IMR-90 (cell line): ENCODE measurements at regions of chr20 and their contacts with region 1.

Region 1: GRCh38 chr20:10848810-10849370 is 175.1 kb upstream of the JAG1 start:
- DNase-seq: peak; percentile 94
- ATAC-seq: peak; percentile 96
- H3K4me3 ChIP-seq: no peak overlapping the region
- H3K27ac ChIP-seq: peak overlapping the region; percentile 50; the same call in 1 of the 2 replicates
- H3K4me1 ChIP-seq: peaks cover 2% of the 10 kb centered on the region; the same call in 1 of the 2 replicates
- H3K27me3 ChIP-seq: no peaks in the 10 kb centered on the region
- CTCF ChIP-seq: no peak
- POLR2A ChIP-seq: no peak
- RAD21 ChIP-seq: peak; percentile 30

Region 2: GRCh38 chr20:10219452-10219791 is 629.5 kb before region 1 on chr20:
- CTCF ChIA-PET with region 1: no interaction called
- POLR2A ChIA-PET with region 1: no interaction called
- dilution Hi-C with region 1: no loop called
- in situ Hi-C with region 1: no loop called
- intact Hi-C with region 1: no loop called
- DNase-seq: peak; percentile 53
- ATAC-seq: peak; percentile 64
- H3K4me3 ChIP-seq: peak overlapping the region; percentile 77
- H3K27ac ChIP-seq: no peak overlapping the region
- H3K4me1 ChIP-seq: peaks cover 2% of the 10 kb centered on the region; the same call in 1 of the 2 replicates
- H3K27me3 ChIP-seq: no peaks in the 10 kb centered on the region
- CTCF ChIP-seq: no peak
- POLR2A ChIP-seq: no peak
- RAD21 ChIP-seq: peak; percentile 24; the same call in 1 of the 2 replicates

Region 3: DNA sequence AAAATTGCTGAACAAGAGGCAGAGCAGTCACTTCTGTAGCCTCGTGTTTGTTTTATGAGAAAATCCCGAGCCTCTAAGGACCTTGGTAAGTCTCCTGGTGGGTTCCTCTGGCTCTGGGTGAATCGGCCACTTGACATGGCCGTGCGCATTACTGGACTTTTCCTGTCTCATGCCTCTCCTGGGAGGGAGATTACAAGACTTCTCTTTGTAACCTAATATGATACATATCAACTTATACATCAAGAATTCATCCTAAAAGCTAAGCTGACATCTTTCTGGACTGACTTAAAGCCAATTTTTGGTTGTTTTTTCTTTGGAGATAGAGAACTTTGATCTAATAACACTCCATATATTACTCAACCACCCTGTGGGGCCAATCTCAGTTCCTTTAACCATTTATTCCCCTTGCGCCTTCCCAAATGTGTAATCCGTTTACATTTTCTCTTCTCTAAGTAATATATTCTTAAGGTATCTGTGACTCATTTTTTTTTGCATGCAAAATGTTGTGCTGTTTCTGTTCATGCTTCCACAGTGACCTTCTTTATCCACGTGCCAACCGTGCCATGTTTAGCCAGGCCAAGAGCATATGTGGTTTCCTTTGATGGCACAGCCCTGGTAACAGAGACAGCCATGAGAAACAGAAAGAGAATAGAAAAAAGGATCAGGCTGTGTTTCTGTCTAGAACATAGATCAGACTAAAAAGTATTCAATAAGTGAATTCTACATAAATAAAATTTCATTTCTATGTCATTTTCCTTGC is 127.6 kb before region 1 on chr20:
- CTCF ChIA-PET with region 1: no interaction called
- POLR2A ChIA-PET with region 1: no interaction called
- dilution Hi-C with region 1: no loop called
- in situ Hi-C with region 1: no loop called
- intact Hi-C with region 1: loop called (anchors 5 kb)
- DNase-seq: peak; percentile 69
- ATAC-seq: peak; percentile 61
- H3K4me3 ChIP-seq: no peak overlapping the region
- H3K27ac ChIP-seq: no peak overlapping the region
- H3K4me1 ChIP-seq: peaks cover 10% of the 10 kb centered on the region
- H3K27me3 ChIP-seq: no peaks in the 10 kb centered on the region; the same call in 1 of the 2 replicates
- CTCF ChIP-seq: no peak
- POLR2A ChIP-seq: no peak
- RAD21 ChIP-seq: no peak

Region 4: GRCh38 chr20:10798811-10799210 is 50.1 kb before region 1 on chr20:
- CTCF ChIA-PET with region 1: no interaction called
- POLR2A ChIA-PET with region 1: no interaction called
- dilution Hi-C with region 1: no loop called
- in situ Hi-C with region 1: no loop called
- intact Hi-C with region 1: no loop called
- DNase-seq: peak; percentile 33
- ATAC-seq: no peak
- H3K4me3 ChIP-seq: no peak overlapping the region
- H3K27ac ChIP-seq: no peak overlapping the region
- H3K4me1 ChIP-seq: peaks cover 2% of the 10 kb centered on the region; the same call in 1 of the 2 replicates
- H3K27me3 ChIP-seq: peaks cover 5% of the 10 kb centered on the region
- CTCF ChIP-seq: no peak
- POLR2A ChIP-seq: no peak
- RAD21 ChIP-seq: no peak

Region 5: GRCh38 chr20:11274141-11274594 is 425.3 kb after region 1 on chr20:
- CTCF ChIA-PET with region 1: no interaction called
- POLR2A ChIA-PET with region 1: no interaction called
- dilution Hi-C with region 1: no loop called
- in situ Hi-C with region 1: no loop called
- intact Hi-C with region 1: loop called (anchors 5 kb)
- DNase-seq: peak; percentile 79
- ATAC-seq: peak; percentile 94
- H3K4me3 ChIP-seq: no peak overlapping the region
- H3K27ac ChIP-seq: no peak overlapping the region
- H3K4me1 ChIP-seq: no peaks in the 10 kb centered on the region
- H3K27me3 ChIP-seq: no peaks in the 10 kb centered on the region
- CTCF ChIP-seq: peak; percentile 78
- POLR2A ChIP-seq: no peak
- RAD21 ChIP-seq: peak; percentile 90

Region 6: GRCh38 chr20:11305406-11305805 is 456.5 kb after region 1 on chr20:
- CTCF ChIA-PET with region 1: no interaction called
- POLR2A ChIA-PET with region 1: no interaction called
- dilution Hi-C with region 1: no loop called
- in situ Hi-C with region 1: no loop called
- intact Hi-C with region 1: no loop called
- DNase-seq: peak; percentile 5
- ATAC-seq: no peak
- H3K4me3 ChIP-seq: no peak overlapping the region
- H3K27ac ChIP-seq: no peak overlapping the region
- H3K4me1 ChIP-seq: peaks cover 5% of the 10 kb centered on the region
- H3K27me3 ChIP-seq: no peaks in the 10 kb centered on the region
- CTCF ChIP-seq: no peak
- POLR2A ChIP-seq: no peak
- RAD21 ChIP-seq: no peak